BJ (cell line): ENCODE measurements at regions of chr1 and their contacts with region 1.

Region 1: GRCh38 chr1:205273551-205273982 is 45.8 kb downstream of the TMCC2 start:
- DNase-seq: no peak
- H3K4me3 ChIP-seq: no peak overlapping the region
- H3K27me3 ChIP-seq: no peaks in the 10 kb centered on the region
- CTCF ChIP-seq: peak; percentile 98

Region 2: GRCh38 chr1:205284343-205285144 is 11.0 kb after region 1 on chr1:
- CTCF ChIA-PET with region 1: interaction called, 53 read pairs
- POLR2A ChIA-PET with region 1: no interaction called
- DNase-seq: peak; percentile 92
- H3K4me3 ChIP-seq: no peak overlapping the region
- H3K27me3 ChIP-seq: no peaks in the 10 kb centered on the region
- CTCF ChIP-seq: peak; percentile 44

Region 3: DNA sequence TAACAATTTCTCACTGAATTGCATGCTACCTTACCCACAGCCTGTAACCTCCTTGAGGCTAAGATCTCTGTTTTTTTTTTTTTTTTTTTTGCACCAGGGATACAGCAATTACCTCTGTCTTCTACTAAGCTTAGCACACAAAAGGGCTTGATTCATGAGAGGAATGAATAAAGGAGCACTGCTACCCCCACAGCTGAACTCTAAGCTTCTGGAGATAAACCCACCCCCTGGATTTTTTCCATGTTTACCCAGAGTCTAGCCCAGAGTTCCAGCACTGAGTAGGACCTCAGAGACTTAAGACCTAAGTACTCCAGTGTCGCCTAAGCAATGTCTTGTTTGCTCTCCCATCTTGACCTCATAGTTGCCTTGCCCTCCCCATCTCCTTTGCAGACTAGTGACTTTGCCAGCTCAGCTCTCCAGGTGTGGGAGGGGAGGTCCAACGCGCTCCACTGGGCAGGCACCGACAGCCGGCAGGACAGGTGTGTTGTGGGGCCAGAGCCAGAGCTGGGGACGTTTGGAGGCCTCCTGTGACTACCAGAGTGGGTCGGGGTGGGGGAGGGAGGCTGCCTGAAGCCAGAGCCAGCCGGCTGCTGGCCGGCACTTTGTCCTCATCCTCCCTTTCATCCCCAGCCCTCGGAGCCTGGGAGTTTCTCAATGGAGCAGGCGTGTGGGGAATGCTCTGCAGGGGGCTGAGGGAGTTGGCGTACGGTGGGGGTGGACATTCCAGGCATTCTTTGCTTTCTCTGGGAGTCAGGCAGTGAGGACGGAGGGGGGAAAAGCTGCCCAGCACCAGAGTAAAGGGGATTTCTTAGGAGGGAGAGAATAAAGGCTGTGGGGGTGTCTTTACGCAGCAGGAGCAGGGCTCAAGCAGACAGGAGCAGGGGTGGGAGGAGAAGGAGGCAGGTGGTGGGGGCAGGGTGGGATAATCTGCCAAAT is 27.6 kb after region 1 on chr1:
- CTCF ChIA-PET with region 1: interaction called, 18 read pairs
- POLR2A ChIA-PET with region 1: no interaction called
- DNase-seq: peak; percentile 82
- H3K4me3 ChIP-seq: no peak overlapping the region
- H3K27me3 ChIP-seq: no peaks in the 10 kb centered on the region
- CTCF ChIP-seq: no peak

Region 4: DNA sequence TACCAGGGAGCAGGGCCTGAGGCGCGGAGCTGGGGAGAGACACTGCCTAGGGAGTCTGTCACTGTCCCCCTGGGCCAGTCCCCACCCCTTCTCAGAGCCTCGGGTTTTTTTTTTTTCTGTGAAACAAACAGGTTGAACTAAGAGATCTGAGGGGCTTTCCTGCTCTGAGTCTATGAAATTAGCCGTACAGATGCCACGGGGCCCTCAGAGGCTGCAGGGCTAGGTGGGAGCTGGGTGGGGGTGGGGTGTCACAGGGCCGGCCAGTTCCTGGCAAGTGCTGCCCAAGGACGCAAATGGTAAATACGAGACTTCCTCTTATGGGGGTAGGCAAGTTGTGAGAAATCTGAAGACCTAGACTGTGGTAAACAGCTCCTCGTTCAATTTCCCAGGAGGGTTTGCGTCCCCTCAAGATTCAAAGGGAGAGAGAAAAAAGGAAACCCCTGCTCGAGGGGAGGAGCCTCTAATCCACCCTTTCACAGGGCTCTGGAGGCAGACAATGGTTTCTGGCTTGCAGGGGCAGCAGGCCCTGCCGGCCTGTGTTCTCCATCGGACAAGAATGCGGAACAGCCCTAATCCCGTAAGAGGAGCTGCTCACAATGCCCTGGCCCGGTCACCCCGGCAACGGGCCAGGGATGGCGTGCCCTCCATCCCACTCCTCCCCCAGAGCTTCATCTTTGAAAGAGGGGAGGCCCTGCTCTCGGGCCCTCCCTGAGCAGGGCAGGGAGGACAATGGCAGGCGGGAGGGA is 40.2 kb after region 1 on chr1:
- CTCF ChIA-PET with region 1: interaction called, 679 read pairs
- POLR2A ChIA-PET with region 1: no interaction called
- DNase-seq: no peak
- H3K4me3 ChIP-seq: no peak overlapping the region
- H3K27me3 ChIP-seq: no peaks in the 10 kb centered on the region
- CTCF ChIP-seq: no peak

Region 5: DNA sequence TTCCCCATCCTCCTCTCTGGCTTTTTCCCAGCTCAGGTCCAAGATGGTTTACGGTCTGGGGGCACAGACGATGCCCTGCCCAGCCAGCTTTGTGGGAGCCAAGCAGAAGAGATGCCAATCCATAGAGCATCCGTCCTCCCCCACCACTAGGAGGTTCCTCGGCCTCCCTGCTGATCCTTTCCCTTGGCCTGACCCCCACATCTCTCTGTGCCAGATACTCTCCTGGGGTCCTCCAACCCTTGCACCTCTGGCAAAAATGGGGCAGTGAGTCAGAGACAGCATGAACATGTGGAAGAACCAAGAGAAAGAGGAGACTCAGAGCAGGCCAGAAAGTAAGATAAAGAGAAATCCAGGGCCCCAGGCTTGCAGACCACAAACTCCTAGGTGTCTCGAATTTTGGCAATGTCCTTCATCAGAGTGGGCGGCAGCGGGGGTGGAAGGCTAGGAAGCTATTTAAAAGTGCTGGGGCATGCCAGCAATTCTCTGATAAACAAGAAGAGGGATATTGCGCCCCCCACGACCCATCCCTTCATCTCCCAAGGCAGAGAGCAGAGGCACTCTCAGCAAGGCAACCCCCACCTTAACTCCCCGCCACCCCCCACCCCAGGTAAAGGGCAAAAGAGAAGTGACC is 170.8 kb after region 1 on chr1:
- CTCF ChIA-PET with region 1: no interaction called
- POLR2A ChIA-PET with region 1: no interaction called
- DNase-seq: no peak
- H3K4me3 ChIP-seq: no peak overlapping the region
- H3K27me3 ChIP-seq: peaks cover 28% of the 10 kb centered on the region
- CTCF ChIP-seq: no peak